CD4-positive, alpha-beta T cell (primary cell): ENCODE measurements at regions of chr2 and their contacts with region 1.

Region 1: GRCh38 chr2:65227425-65228262 is at the start of gene ACTR2:
- DNase-seq: peak; percentile 87 to 98 (median 92)
- ATAC-seq: peak; percentile 93
- H3K4me3 ChIP-seq: peak within 1 kb of the TSS; percentile 76
- H3K4me3 Mint-ChIP-seq: peak within 1 kb of the TSS; percentile 100
- H3K27ac ChIP-seq: peak within 1 kb of the TSS; percentile 97 to 98
- H3K27ac Mint-ChIP-seq: peak within 1 kb of the TSS; percentile 98
- H3K4me1 ChIP-seq: peaks cover 35% of the 10 kb centered on the region
- H3K4me1 Mint-ChIP-seq: peaks cover 53% of the 10 kb centered on the region
- H3K27me3 ChIP-seq: no peaks in the 10 kb centered on the region
- H3K27me3 Mint-ChIP-seq: no peaks in the 10 kb centered on the region
- CTCF ChIP-seq: no peak
- total RNA-seq, gene ACTR2: 128 to 130 TPM

Region 2: DNA sequence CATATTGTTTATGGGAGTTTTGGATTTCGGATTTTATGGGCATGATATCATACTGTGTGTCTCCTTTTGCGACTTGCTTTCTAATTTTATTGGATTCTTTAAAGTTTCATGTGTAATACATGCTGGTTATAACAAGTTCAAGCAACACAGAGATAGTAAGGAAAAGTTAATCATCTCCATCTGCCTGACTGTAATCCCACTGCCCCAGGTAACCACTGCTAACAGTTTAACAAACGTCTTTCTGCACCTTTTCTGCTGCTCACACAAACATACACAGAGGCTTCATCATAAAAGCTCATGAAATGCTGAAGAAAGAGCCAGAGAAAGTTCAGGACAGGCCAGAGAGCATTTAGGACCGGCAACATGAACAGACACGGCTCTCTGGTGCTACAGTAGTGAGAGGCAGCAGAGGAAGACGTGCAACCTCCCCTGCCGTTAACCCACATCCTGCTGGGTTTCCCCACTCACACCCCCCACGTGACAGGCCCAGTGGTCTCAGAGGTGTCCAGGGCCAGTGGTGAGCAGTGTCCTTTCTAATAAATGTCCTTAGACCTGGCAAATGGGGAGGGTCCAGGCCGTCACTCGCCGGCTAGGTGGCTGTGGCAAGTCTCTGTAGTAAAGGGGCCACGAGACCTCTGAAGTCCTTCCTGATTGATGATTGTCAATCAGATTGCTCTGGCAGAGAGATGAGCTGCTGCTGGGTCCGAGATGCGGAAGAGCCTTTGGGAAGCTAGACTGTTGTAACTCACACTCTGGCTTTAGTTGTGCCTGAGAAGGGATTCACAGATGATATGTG is 281.5 kb before region 1 on chr2:
- CTCF ChIA-PET with region 1: no interaction called
- POLR2A ChIA-PET with region 1: no interaction called
- intact Hi-C with region 1: no loop called
- DNase-seq: peak; percentile 11 to 80 (median 43)
- ATAC-seq: peak; percentile 84
- H3K4me3 ChIP-seq: peak overlapping the region; percentile 39
- H3K4me3 Mint-ChIP-seq: peak overlapping the region; percentile 66
- H3K27ac ChIP-seq: peak overlapping the region in 1 of 2 donors; percentile 27
- H3K27ac Mint-ChIP-seq: peak overlapping the region; percentile 47
- H3K4me1 ChIP-seq: peaks cover 33% of the 10 kb centered on the region
- H3K4me1 Mint-ChIP-seq: peaks cover 33% of the 10 kb centered on the region
- H3K27me3 ChIP-seq: no peaks in the 10 kb centered on the region
- H3K27me3 Mint-ChIP-seq: no peaks in the 10 kb centered on the region
- CTCF ChIP-seq: no peak

Region 3: GRCh38 chr2:65215946-65216345 is 11.7 kb before region 1 on chr2:
- CTCF ChIA-PET with region 1: no interaction called
- POLR2A ChIA-PET with region 1: interaction called, 23 read pairs
- intact Hi-C with region 1: no loop called
- DNase-seq: no peak
- ATAC-seq: no peak
- H3K4me3 ChIP-seq: no peak overlapping the region
- H3K4me3 Mint-ChIP-seq: no peak overlapping the region
- H3K27ac ChIP-seq: no peak overlapping the region
- H3K27ac Mint-ChIP-seq: no peak overlapping the region
- H3K4me1 ChIP-seq: no peaks in the 10 kb centered on the region
- H3K4me1 Mint-ChIP-seq: no peaks in the 10 kb centered on the region
- H3K27me3 ChIP-seq: no peaks in the 10 kb centered on the region
- H3K27me3 Mint-ChIP-seq: no peaks in the 10 kb centered on the region
- CTCF ChIP-seq: no peak